ENCODE measurements at regions of chr22 and their contacts with region 1.

Region 1: DNA sequence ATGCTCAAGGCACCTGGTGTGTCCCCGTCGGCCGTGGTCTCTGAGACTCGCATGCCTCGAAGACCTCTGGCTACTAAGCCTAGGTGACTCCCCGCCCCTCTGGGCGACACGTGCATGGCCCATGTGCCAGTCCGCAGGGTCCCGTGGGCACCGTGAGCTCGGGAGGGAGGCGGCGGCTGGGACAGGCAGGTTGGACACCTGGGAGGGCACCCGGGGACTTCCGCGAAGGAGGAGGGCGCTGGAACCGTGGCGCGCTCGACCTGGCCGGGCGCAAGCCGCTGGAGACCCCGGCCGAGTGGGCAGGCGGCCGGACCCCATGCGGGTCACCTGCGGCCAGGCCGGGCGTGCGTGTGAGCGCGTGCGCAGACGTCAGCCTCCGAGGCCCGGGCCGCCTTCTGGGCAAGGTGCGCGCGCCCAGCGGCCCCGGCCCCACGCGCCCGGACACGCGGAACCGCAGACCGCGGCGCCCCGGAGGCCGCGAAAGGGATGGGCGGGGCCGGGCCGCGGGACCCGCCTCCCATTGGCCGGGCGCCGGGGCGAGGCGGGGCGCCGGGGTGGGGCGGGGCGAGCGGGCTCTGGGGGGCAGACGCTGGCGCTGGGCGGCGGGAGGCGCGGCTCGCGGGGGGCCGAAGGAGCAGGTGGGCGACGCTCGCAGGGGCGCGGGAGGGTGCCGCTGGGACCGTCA is 579 bp upstream of the RASD2 start:
- DNase-seq: peak; percentile 72 to 90
- ATAC-seq: peak; percentile 68
- H3K4me3 ChIP-seq: peak overlapping the region; percentile 13 to 68
- H3K27ac ChIP-seq: peak overlapping the region in 1 of 2 donors; percentile 26
- H3K4me1 ChIP-seq: no peaks in the 10 kb centered on the region
- H3K27me3 ChIP-seq: no peaks in the 10 kb centered on the region

Region 2: GRCh38 chr22:35219012-35219411 is 321.0 kb before region 1 on chr22:
- intact Hi-C with region 1: no loop called
- DNase-seq: no peak
- ATAC-seq: no peak
- H3K4me3 ChIP-seq: no peak overlapping the region
- H3K27ac ChIP-seq: no peak overlapping the region
- H3K4me1 ChIP-seq: no peaks in the 10 kb centered on the region
- H3K27me3 ChIP-seq: peaks cover 0 to 1% of the 10 kb centered on the region in 2 donors

Region 3: DNA sequence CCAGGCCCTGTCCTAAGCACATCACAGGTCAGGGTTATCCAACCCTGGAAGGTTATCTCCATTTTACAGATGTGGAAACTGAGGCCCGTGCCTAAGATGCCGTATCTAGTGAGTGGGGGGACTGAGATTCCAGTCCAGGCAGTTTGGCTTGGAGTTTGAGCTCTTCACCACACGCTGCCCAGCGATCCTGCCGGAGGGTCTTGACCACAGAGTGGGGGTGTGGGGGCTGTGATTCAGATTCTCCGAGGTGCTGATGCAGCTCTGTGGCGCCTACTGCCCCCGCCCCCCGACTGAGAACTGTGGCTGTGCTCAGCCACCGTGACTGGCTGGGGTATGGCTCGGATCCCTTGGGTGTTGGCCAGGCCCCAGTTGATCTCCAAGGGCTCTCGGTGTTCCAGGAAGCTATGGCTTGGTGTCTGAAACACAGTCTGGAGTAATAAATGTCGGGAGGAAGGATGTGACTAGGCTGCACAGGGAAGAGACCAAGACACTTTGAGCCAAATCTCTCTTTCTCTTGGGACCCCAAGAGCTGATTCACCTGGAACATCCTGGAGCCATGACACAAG is 60.0 kb before region 1 on chr22:
- intact Hi-C with region 1: loop called in 1 of 2 experiments (anchors 5 kb)
- DNase-seq: peak in 1 of 2 donors; percentile 84
- ATAC-seq: peak; percentile 40
- H3K4me3 ChIP-seq: no peak overlapping the region
- H3K27ac ChIP-seq: no peak overlapping the region
- H3K4me1 ChIP-seq: no peaks in the 10 kb centered on the region
- H3K27me3 ChIP-seq: no peaks in the 10 kb centered on the region

Region 4: GRCh38 chr22:35921777-35922176 is 381.7 kb after region 1 on chr22:
- intact Hi-C with region 1: loop called in 1 of 2 experiments (anchors 10 kb)
- DNase-seq: peak in 1 of 2 donors; percentile 68
- ATAC-seq: peak; percentile 95
- H3K4me3 ChIP-seq: no peak overlapping the region
- H3K27ac ChIP-seq: peak overlapping the region; percentile 4 to 84
- H3K4me1 ChIP-seq: peaks cover 0 to 5% of the 10 kb centered on the region in 2 donors
- H3K27me3 ChIP-seq: no peaks in the 10 kb centered on the region

Region 5: DNA sequence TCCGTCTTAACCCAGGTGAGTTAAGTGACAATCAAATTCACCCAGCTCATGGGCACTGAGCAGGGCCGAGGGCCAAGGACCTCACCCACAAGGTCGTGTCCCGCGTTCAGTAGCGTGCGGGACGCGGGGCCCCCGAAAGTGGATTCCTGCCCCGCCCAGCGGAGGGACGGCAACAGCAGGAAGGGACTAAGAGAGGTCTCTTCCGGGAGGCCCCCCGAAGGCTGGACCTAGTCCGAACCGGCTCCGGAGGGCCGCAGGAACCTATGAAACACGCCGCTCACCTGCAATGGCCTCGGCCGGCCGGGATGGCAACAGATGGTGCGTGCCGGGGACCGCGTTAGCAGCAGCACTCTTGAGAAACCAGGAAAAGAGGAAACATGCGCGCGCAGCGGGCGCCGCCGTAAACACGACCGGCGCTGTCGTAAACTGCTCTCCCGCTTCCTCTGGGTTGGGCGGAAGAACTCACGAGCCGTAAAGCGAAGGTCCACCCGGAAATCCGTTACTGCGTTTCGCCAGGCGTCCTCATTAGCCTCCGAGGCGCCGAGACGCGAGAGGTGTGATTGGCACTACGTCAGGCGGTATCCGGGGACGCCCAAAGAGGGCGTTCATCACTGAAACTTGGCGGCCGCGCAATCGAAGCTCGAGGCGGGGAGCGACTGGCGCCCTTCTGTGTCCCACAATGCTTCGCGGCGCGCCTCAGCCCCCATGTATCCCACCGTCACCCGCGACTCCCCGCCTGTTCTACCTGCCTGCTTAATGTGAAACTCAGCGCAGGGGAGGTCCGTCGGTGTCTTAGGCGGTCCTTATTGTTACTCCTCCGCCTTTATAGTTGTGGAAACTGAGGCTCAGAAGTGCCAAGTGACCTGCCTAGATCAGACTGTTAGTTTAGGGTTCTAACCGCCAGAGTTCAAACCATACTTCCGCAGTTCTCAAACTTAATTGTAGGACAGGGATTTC is 989.0 kb after region 1 on chr22 and contains the start of gene EIF3D:
- intact Hi-C with region 1: loop called in 1 of 2 experiments (anchors 5 kb)
- DNase-seq: peak; percentile 99
- ATAC-seq: peak; percentile 98
- H3K4me3 ChIP-seq: peak within 1 kb of the TSS; percentile 85 to 88
- H3K27ac ChIP-seq: peak within 1 kb of the TSS; percentile 20 to 86
- H3K4me1 ChIP-seq: no peaks in the 10 kb centered on the region
- H3K27me3 ChIP-seq: no peaks in the 10 kb centered on the region
- total RNA-seq, gene EIF3D: 122 to 146 TPM